Motor neuron (in vitro differentiated cells): ENCODE measurements at regions of chr11 and their contacts with region 1.

Region 1: DNA sequence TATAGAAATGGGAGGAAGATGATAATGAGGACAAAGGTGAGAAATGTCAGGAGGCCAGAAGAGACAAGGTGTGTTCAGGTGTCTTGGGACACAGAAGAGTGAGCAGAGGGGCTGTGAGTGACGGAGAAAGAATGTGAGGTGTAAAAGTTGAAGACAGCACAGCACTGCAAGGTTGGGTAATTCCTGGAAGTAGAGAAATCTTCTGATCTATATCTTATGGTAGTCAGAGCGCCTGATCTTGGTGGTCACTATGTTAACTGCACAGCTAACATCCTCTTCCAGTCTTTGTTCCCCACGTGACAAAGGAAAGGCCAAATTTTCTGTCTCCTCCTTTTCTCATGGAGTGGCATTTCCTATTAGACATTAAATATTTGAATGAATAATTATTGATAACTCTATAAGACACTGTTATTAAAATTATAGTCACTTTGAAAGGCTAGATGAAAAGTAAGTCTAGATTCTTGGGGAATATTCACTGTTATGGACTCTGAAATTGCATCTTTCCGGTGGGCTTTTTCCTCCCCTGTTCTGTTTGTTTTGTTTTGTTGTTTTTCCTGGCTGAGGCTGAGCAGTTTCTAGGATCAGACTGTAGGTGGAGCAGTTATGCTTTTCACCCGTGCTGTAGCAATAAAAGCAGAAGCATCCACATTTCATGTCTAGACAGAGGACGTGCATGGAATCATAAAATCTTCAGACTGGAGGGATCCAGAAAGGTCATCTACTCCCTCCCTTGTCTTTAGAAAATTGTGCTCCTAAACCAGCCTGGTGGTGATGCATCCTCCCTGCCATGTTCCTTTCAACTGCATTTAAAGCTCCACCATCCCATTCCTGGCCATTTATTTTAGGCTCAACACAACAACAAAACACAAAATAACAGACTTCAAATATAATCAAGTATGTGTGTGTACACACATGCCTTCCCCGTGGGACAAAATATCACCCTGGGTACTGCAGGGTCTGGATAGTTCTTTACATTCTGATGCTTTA is 26.6 kb downstream of the SC5D start:
- ATAC-seq: peak; percentile 79 to 99 (median 97)
- H3K4me3 ChIP-seq: no peak overlapping the region
- H3K27ac ChIP-seq: no peak overlapping the region
- H3K4me1 ChIP-seq: peaks cover 5 to 11% of the 10 kb centered on the region in 2 donors

Region 2: GRCh38 chr11:121451986-121452608 is 133.0 kb after region 1 on chr11 and contains the start of gene SORL1:
- in situ Hi-C with region 1: loop called in 1 of 9 experiments (anchors 25 kb)
- ATAC-seq: peak; percentile 95 to 98 (median 96)
- H3K4me3 ChIP-seq: peak within 1 kb of the TSS; percentile 79 to 88 (median 81)
- H3K27ac ChIP-seq: peak within 1 kb of the TSS; percentile 43 to 62
- H3K4me1 ChIP-seq: peaks cover 8 to 29% of the 10 kb centered on the region in 2 donors
- total RNA-seq, gene SORL1: 0.36 to 39.4 (median 21.8) TPM

Region 3: GRCh38 chr11:121534131-121535093 is 215.3 kb after region 1 on chr11:
- in situ Hi-C with region 1: loop called in 1 of 9 experiments (anchors 10 kb)
- ATAC-seq: peak; percentile 46 to 81 (median 74)
- H3K4me3 ChIP-seq: no peak overlapping the region
- H3K27ac ChIP-seq: no peak overlapping the region
- H3K4me1 ChIP-seq: peaks cover 0 to 16% of the 10 kb centered on the region in 2 donors

Region 4: DNA sequence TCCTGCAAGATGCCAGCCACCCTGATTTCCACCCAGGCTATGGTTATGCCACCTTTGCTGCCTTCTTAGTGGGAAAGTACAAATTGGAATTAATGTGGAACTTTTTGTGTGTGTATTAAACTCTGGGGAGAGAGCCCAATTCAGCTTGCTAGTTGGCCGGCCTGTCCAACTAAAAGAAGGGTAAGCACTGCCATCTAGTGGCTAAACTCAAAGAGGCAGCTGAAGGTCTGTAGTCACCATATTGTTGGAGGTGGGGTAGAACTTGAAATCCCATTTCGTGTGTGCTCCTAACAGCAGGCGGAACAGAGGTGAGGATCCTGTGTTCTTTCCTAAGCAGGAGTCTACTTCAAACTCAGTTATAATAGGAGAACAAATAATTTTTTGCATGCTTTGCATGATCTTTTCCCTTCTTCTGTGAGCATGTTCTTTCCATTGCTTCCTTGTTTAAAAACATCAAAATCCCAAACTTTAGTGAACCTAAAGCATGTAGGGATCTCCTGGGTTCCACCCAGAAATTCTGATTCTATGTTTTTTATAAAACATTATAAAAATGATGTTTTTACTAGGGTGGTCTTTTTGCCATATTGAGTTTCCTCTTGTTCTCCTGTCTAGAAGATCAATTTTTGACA is 272.4 kb after region 1 on chr11:
- in situ Hi-C with region 1: loop called in 2 of 9 experiments (anchors 5 to 10 kb)
- ATAC-seq: peak; percentile 8 to 79 (median 68)
- H3K4me3 ChIP-seq: no peak overlapping the region
- H3K27ac ChIP-seq: no peak overlapping the region
- H3K4me1 ChIP-seq: peaks cover 0 to 5% of the 10 kb centered on the region in 2 donors